WTC11 (cell line): ENCODE measurements at regions of chr5 and their contacts with region 1.

Region 1: DNA sequence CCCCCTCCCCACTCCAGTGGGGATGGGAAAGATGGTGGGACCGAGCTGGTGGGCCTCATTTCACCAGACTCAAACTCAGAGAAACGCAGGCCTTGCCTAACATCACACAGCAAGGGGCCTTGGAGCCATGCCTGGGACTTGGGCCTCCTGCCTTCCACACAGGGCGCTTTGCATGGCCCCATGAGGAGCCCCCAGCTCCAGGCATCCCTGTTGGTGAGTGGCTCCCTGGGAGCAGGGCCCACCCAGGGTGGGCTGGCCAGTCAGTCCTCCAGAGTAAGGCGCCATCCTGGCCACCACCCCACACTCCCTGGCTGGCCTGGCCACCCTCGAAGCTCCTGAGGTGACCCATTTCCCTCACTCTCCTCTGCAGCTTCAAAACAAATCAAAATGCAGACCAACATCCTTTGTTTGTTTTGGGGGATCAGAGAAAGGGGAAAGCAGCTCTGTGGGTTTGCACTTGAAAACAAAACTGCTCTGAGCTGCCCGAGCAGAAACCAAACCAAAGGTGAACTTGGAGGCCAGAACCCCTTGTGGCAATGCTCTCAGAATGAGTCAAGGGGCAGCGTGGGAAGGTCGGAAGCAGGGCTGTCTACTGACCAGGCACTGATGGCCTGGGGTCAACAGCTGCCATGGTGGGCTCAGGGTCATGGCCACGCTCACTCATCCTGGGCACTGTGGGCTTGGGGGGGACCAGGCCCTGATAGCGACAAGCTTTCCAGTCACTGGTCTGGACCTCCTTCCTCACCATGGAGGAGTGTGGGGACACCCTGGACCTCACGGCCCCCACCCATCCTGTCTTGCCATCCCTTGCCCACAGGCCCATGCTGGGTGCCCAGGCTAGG is 37.0 kb upstream of the VDAC1 start:
- DNase-seq: no peak
- ATAC-seq: no peak
- H3K4me3 Mint-ChIP-seq: no peak overlapping the region
- H3K27ac Mint-ChIP-seq: no peak overlapping the region
- H3K4me1 Mint-ChIP-seq: peaks cover 6% of the 10 kb centered on the region
- H3K27me3 Mint-ChIP-seq: peaks cover 23% of the 10 kb centered on the region
- CTCF ChIP-seq: no peak

Region 2: GRCh38 chr5:134004592-134005375 is 37.0 kb before region 1 on chr5 and contains the start of gene VDAC1:
- CTCF ChIA-PET with region 1: interaction called, 12 read pairs
- POLR2A ChIA-PET with region 1: no interaction called
- DNase-seq: peak; percentile 74
- ATAC-seq: peak; percentile 76
- H3K4me3 Mint-ChIP-seq: peak within 1 kb of the TSS; percentile 90
- H3K27ac Mint-ChIP-seq: peak within 1 kb of the TSS; percentile 94
- H3K4me1 Mint-ChIP-seq: peaks cover 56% of the 10 kb centered on the region
- H3K27me3 Mint-ChIP-seq: no peaks in the 10 kb centered on the region
- CTCF ChIP-seq: no peak
- total RNA-seq, gene VDAC1: 266 to 274 TPM (median 268 TPM) in 3 replicates

Region 3: GRCh38 chr5:134053840-134054338 is 12.1 kb after region 1 on chr5:
- CTCF ChIA-PET with region 1: interaction called, 47 read pairs
- POLR2A ChIA-PET with region 1: no interaction called
- DNase-seq: no peak
- ATAC-seq: peak; percentile 28; the same call in 1 of the 2 replicates
- H3K4me3 Mint-ChIP-seq: no peak overlapping the region
- H3K27ac Mint-ChIP-seq: peak overlapping the region; percentile 32
- H3K4me1 Mint-ChIP-seq: peaks cover 46% of the 10 kb centered on the region
- H3K27me3 Mint-ChIP-seq: peaks cover 14% of the 10 kb centered on the region
- CTCF ChIP-seq: no peak

Region 4: GRCh38 chr5:134086943-134087305 is 45.1 kb after region 1 on chr5:
- CTCF ChIA-PET with region 1: interaction called, 19 read pairs
- POLR2A ChIA-PET with region 1: no interaction called
- DNase-seq: no peak
- ATAC-seq: no peak
- H3K4me3 Mint-ChIP-seq: no peak overlapping the region
- H3K27ac Mint-ChIP-seq: no peak overlapping the region
- H3K4me1 Mint-ChIP-seq: peaks cover 6% of the 10 kb centered on the region
- H3K27me3 Mint-ChIP-seq: peaks cover 4% of the 10 kb centered on the region; the same call in 1 of the 2 replicates
- CTCF ChIP-seq: no peak

Region 5: GRCh38 chr5:134113902-134114875 is 72.4 kb after region 1 on chr5 and contains the start of gene TCF7:
- CTCF ChIA-PET with region 1: interaction called, 37 read pairs
- POLR2A ChIA-PET with region 1: no interaction called
- DNase-seq: peak; percentile 75
- ATAC-seq: peak; percentile 84
- H3K4me3 Mint-ChIP-seq: peak within 1 kb of the TSS; percentile 79
- H3K27ac Mint-ChIP-seq: peak within 1 kb of the TSS; percentile 80; the same call in 1 of the 2 replicates
- H3K4me1 Mint-ChIP-seq: peaks cover 11% of the 10 kb centered on the region
- H3K27me3 Mint-ChIP-seq: peaks cover 40% of the 10 kb centered on the region
- CTCF ChIP-seq: no peak
- total RNA-seq, gene TCF7: 8.9 to 11.3 TPM (median 9.6 TPM) in 3 replicates

Region 6: DNA sequence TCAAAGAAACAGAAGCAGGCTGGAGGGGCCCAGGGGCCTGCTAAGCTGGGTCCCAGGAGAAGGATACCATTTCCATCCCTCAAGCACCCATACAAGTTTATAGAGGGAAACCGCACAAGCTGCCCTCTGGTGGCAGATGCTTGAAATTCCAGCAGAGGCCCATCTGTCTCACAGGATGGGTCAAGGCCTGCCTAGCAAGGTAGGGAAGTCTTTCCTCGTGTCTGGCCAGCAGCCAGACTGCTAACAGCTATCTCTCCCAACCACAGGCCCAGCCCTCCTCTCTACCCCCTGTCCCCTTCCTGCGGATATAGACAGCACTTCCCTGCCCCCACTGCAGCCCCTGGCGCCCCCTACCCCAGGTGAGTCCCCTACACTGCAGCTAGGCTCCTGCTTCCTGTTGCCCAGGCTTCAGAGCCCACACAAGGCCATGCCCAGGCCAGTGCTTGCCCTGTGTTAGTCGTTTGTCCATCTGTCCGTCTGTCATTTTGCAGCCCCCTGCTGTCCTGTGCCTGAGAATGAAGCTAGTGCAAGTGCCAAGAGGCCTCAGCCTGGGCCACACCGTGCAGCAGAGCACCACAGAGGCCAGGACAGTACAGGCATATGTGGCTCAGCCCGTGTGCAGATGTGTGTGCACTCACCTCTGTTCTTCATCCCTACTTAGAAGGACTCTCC is 98.9 kb after region 1 on chr5:
- CTCF ChIA-PET with region 1: interaction called, 202 read pairs
- POLR2A ChIA-PET with region 1: interaction called, 4 read pairs
- DNase-seq: peak; percentile 80
- ATAC-seq: peak; percentile 83
- H3K4me3 Mint-ChIP-seq: no peak overlapping the region
- H3K27ac Mint-ChIP-seq: peak overlapping the region; percentile 86; the same call in 1 of the 2 replicates
- H3K4me1 Mint-ChIP-seq: peaks cover 14% of the 10 kb centered on the region
- H3K27me3 Mint-ChIP-seq: no peaks in the 10 kb centered on the region
- CTCF ChIP-seq: peak; percentile 72